Left ventricle myocardium inferior (tissue), 1 donor: ENCODE measurements at regions of chr5 and their contacts with region 1.

Region 1: DNA sequence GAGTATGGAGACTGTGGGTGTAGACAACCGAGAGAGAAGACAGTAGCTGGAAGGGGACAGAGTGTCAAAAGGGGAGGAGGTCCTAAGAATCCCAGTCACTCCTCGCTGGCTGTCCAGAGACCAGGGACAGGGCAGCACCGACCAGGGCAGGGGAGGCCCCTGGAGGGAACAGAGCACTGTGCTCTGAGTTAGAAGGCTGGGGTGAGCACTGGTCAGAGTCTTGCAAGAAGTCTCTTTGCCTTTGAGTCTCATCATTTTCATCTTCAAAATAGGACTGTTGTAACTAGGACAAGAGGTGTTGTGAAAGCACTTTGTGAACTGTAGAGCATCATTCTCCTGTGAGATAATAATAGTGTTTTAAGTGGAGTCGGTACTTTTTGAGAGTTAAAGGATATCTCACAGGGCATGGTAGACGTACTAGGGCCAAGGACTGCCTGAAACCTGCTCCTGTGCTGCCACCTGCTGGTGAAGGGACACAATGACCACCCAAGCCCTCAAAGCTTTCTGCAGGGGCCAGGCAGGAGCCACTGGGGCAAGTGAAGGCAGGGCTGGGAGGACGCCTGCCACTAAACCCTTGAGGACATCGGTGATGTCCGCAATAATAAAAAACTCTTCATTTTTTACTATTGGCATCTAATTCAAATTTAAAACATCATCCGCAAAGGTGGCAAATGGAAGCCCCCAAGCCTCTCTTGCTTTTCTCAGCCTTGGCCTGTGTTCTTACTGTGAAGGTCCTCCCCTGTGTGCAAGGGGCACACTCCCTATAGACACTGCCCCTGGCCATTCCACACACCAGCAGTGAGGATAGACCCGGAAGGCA is 28.2 kb downstream of the SLC6A7 start:
- DNase-seq: peak; percentile 82
- H3K4me3 ChIP-seq: no peak overlapping the region
- H3K27ac ChIP-seq: no peak overlapping the region
- H3K4me1 ChIP-seq: peaks cover 34% of the 10 kb centered on the region
- H3K27me3 ChIP-seq: peaks cover 4% of the 10 kb centered on the region
- CTCF ChIP-seq: peak; percentile 94

Region 2: GRCh38 chr5:150022163-150022540 is 195.9 kb before region 1 on chr5:
- intact Hi-C with region 1: loop called (anchors 10 kb)
- DNase-seq: no peak
- H3K4me3 ChIP-seq: peak overlapping the region; percentile 32
- H3K27ac ChIP-seq: peak overlapping the region; percentile 86
- H3K4me1 ChIP-seq: peaks cover 60% of the 10 kb centered on the region
- H3K27me3 ChIP-seq: no peaks in the 10 kb centered on the region
- CTCF ChIP-seq: no peak

Region 3: DNA sequence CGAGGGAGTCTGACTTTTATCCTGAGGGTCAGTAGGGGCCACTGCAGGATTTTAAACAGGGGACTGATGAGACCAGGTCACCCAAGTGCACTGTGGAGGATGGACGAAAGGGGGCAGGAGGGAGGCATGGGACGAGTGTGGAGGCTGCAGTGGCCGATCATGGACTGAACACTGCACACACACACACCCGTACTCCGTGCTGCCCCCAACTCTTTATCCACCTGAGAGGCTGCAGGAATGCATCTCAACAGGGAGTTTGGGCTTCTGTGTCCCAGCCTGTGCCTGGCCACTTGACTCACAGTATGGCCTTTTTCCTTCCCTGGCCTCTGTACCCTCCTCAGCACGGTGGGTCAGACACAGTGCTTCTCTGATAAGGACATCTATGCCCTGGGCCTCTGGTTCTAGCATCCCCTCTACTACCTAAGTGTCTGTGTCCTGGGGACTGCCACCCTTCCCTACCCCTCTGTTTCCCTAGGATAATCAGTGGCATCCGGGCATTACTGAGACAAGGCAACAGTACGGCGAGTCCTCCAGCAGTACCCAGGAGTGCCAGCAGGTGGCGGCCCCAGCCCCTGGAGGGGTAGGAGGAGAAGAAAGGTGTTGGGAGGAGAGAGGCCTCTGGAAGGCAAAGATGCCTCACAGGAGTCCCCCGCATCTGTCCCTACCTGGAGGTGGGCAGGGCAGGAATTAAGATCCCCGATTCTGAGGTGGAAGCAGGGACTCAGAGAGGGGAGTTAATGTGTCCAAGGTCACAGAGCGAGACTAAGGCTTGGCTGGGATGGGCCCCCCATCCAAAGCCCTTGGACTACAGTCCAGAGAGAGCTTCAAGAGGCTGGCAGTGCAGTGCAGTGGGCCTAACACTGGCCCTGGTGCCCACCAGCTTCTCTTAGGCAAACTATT is 56.6 kb before region 1 on chr5:
- intact Hi-C with region 1: loop called (anchors 5 kb)
- DNase-seq: peak; percentile 86
- H3K4me3 ChIP-seq: no peak overlapping the region
- H3K27ac ChIP-seq: peak overlapping the region; percentile 89
- H3K4me1 ChIP-seq: peaks cover 76% of the 10 kb centered on the region
- H3K27me3 ChIP-seq: peaks cover 6% of the 10 kb centered on the region
- CTCF ChIP-seq: peak; percentile 92